Common myeloid progenitor, CD34-positive (primary cell): ENCODE measurements at regions of chr4 and their contacts with region 1.

Region 1: GRCh38 chr4:159871141-159871540 is 768.3 kb downstream of the RAPGEF2 start:
- DNase-seq: no peak
- H3K4me3 ChIP-seq: no peak overlapping the region
- H3K27ac ChIP-seq: no peak overlapping the region
- H3K4me1 ChIP-seq: no peaks in the 10 kb centered on the region
- H3K27me3 ChIP-seq: no peaks in the 10 kb centered on the region

Region 2: DNA sequence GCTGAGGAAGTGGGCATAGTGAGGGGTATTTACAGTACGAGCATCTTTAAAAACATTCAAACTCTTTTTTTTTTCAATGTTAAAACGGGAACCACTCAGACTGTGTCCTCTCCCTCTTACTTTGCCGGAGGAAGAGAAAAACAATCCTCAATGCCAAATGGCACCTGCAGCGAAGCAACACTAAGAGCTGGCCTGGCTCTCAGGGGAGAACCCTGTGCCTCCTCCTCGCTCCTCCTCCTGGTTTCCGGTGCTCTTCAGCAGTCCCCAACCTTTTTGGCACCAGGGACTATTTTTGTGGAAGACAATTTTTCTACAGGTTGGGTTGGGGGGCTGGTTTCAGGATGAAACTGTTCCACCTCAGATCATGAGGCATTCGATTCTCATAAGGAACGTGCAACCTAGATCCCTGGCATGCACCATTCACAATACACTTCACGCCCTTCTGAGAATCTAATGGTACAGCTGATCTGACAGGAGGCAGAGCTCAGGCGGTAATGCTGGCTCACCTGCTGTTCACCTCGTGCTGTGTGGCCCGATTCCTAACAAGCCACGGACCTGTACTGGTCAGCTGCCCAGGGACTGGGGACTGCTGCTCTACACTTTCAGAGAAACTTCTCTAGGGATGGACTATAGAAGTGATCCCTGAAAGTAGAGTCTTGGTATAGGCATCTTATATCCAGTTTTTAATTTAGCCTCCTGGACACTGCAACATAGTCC is 364.2 kb before region 1 on chr4:
- CTCF ChIA-PET with region 1: no interaction called
- POLR2A ChIA-PET with region 1: interaction called, 11 read pairs
- DNase-seq: no peak
- H3K4me3 ChIP-seq: no peak overlapping the region
- H3K27ac ChIP-seq: no peak overlapping the region
- H3K4me1 ChIP-seq: no peaks in the 10 kb centered on the region
- H3K27me3 ChIP-seq: peaks cover 0 to 31% (median 2%) of the 10 kb centered on the region in 5 experiments

Region 3: GRCh38 chr4:159837071-159837470 is 34.1 kb before region 1 on chr4:
- CTCF ChIA-PET with region 1: no interaction called
- POLR2A ChIA-PET with region 1: no interaction called
- DNase-seq: no peak
- H3K4me3 ChIP-seq: no peak overlapping the region
- H3K27ac ChIP-seq: no peak overlapping the region
- H3K4me1 ChIP-seq: no peaks in the 10 kb centered on the region
- H3K27me3 ChIP-seq: no peaks in the 10 kb centered on the region

Region 4: DNA sequence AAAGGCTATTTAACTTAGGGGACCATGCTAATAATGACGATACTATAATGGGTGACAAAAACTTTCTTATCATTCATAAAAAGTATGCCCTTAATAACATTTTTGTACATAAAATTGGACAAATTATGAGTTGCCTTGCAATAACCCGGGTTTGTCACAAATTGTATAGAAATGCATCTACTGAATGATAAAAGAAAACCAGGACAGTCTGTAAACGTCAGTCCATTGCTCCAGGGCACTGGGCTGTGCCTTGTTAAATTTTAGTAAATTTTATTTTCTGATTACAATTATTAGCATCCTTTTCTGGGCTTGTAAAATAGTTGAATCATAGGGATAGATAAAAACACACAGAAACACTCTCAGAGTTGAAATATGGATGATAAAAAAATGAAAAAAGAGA is 10.0 kb after region 1 on chr4:
- CTCF ChIA-PET with region 1: no interaction called
- POLR2A ChIA-PET with region 1: no interaction called
- DNase-seq: no peak
- H3K4me3 ChIP-seq: no peak overlapping the region
- H3K27ac ChIP-seq: no peak overlapping the region
- H3K4me1 ChIP-seq: peaks cover 0 to 3% (median 0%) of the 10 kb centered on the region in 4 experiments
- H3K27me3 ChIP-seq: no peaks in the 10 kb centered on the region

Region 5: GRCh38 chr4:160142579-160142978 is 271.4 kb after region 1 on chr4:
- CTCF ChIA-PET with region 1: no interaction called
- POLR2A ChIA-PET with region 1: no interaction called
- DNase-seq: no peak
- H3K4me3 ChIP-seq: no peak overlapping the region
- H3K27ac ChIP-seq: no peak overlapping the region
- H3K4me1 ChIP-seq: no peaks in the 10 kb centered on the region
- H3K27me3 ChIP-seq: no peaks in the 10 kb centered on the region